ENCODE measurements at regions of chr1 and their contacts with region 1.

Region 1: DNA sequence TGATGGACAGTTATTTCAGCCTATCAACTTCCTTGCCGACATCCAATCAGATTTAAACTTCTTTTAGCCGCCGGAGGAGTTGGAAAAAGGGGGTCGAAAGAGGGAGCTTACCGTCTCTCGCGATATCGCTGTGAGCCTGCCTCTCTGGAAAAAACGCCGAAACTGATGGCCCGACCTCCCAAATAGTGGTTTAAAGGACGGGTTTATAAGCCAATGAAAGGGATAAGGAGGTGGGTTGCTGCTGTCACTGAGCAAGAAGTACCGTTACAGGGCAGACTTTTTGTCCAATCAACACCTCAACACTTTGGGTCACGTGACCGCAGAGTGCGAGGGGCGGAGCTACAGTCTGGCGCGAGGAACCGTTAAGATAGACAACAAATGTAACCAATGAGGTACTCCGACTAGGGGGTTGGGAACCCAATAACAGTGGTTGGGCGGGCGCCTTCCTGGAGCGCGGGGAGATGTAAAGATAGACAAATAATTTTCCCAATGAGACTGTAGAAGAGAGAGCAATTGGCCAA is at the start of gene RBM15:
- DNase-seq: peak; percentile 97 to 99 (median 98)
- ATAC-seq: peak; percentile 66 to 85 (median 78)
- H3K4me3 ChIP-seq: peak within 1 kb of the TSS; percentile 84 to 96 (median 96)
- H3K27ac ChIP-seq: peak within 1 kb of the TSS; percentile 95 to 99 (median 98)
- H3K4me1 ChIP-seq: peaks cover 0 to 58% (median 16%) of the 10 kb centered on the region in 4 donors
- H3K27me3 ChIP-seq: no peaks in the 10 kb centered on the region
- CTCF ChIP-seq: no peak
- POLR2A ChIP-seq: no peak
- total RNA-seq, gene RBM15: 8.9 to 15.1 (median 12.2) TPM

Region 2: DNA sequence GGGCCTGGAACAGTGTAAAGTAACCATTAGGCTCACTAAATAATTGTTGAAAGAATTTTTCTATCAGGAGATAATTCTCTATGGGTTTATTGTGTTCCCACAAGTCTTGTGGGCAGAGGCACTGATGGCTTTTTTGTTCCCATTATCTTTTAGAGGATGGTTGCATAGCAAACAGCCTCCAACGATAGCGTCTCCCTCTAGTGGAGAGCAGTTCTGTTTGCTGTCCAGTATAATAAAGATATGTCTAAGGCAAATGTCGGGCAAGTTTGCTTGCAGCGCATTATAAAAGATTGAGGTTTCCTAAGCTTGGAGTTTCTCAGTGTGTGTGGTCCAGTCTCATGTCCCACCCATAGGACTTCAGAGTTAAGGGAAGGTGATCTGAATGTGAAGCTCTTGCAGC is 190.0 kb before region 1 on chr1:
- intact Hi-C with region 1: no loop called
- DNase-seq: no peak
- ATAC-seq: no peak
- H3K4me3 ChIP-seq: no peak overlapping the region
- H3K27ac ChIP-seq: no peak overlapping the region
- H3K4me1 ChIP-seq: no peaks in the 10 kb centered on the region
- H3K27me3 ChIP-seq: no peaks in the 10 kb centered on the region
- CTCF ChIP-seq: peak in 2 of 4 donors; percentile 24 to 25
- POLR2A ChIP-seq: no peak

Region 3: GRCh38 chr1:110170766-110171733 is 167.9 kb before region 1 on chr1:
- intact Hi-C with region 1: no loop called
- DNase-seq: no peak
- ATAC-seq: no peak
- H3K4me3 ChIP-seq: no peak overlapping the region
- H3K27ac ChIP-seq: no peak overlapping the region
- H3K4me1 ChIP-seq: no peaks in the 10 kb centered on the region
- H3K27me3 ChIP-seq: no peaks in the 10 kb centered on the region
- CTCF ChIP-seq: no peak
- POLR2A ChIP-seq: no peak

Region 4: GRCh38 chr1:110390692-110391245 is 51.8 kb after region 1 on chr1 and contains the start of gene SLC16A4:
- intact Hi-C with region 1: loop called in 1 of 2 experiments (anchors 10 kb)
- DNase-seq: no peak
- ATAC-seq: peak; percentile 73 to 91 (median 80)
- H3K4me3 ChIP-seq: peak within 1 kb of the TSS in 2 of 3 donors; percentile 26 to 29
- H3K27ac ChIP-seq: peak within 1 kb of the TSS in 1 of 3 donors; percentile 22
- H3K4me1 ChIP-seq: peaks cover 0 to 13% (median 0%) of the 10 kb centered on the region in 4 donors
- H3K27me3 ChIP-seq: no peaks in the 10 kb centered on the region
- CTCF ChIP-seq: no peak
- POLR2A ChIP-seq: no peak
- total RNA-seq, gene SLC16A4: 0.49 to 4.0 (median 3.4) TPM

Region 5: GRCh38 chr1:110407260-110408210 is 68.6 kb after region 1 on chr1 and contains the start of gene LAMTOR5:
- intact Hi-C with region 1: loop called in 1 of 2 experiments (anchors 5 kb)
- DNase-seq: peak; percentile 92 to 96 (median 94)
- ATAC-seq: peak; percentile 95 to 97 (median 96)
- H3K4me3 ChIP-seq: peak within 1 kb of the TSS; percentile 89 to 97 (median 96)
- H3K27ac ChIP-seq: peak within 1 kb of the TSS; percentile 91 to 98 (median 95)
- H3K4me1 ChIP-seq: peaks cover 0 to 28% (median 0%) of the 10 kb centered on the region in 4 donors
- H3K27me3 ChIP-seq: no peaks in the 10 kb centered on the region
- CTCF ChIP-seq: peak in 1 of 4 donors; percentile 8
- POLR2A ChIP-seq: peak; percentile 88
- total RNA-seq, gene LAMTOR5: 47.6 to 81.4 (median 53.9) TPM

Region 6: GRCh38 chr1:110433803-110434202 is 94.9 kb after region 1 on chr1:
- intact Hi-C with region 1: no loop called
- DNase-seq: peak; percentile 82 to 87 (median 84)
- ATAC-seq: peak; percentile 99 to 100 (median 100)
- H3K4me3 ChIP-seq: no peak overlapping the region
- H3K27ac ChIP-seq: no peak overlapping the region
- H3K4me1 ChIP-seq: peaks cover 0 to 9% (median 0%) of the 10 kb centered on the region in 4 donors
- H3K27me3 ChIP-seq: no peaks in the 10 kb centered on the region
- CTCF ChIP-seq: peak; percentile 30 to 53 (median 46)
- POLR2A ChIP-seq: no peak

Measured in right lobe of liver (tissue), 6 donors.